PC-3 (cell line): ENCODE measurements at regions of chr20 and their contacts with region 1.

Region 1: GRCh38 chr20:63657937-63658748 is at the start of gene RTEL1:
- DNase-seq: peak; percentile 93
- ATAC-seq: peak; percentile 97
- H3K4me3 ChIP-seq: peak within 1 kb of the TSS; percentile 91
- H3K27ac ChIP-seq: peak within 1 kb of the TSS; percentile 41
- H3K4me1 ChIP-seq: peaks cover 9% of the 10 kb centered on the region; the same call in 1 of the 2 replicates
- H3K27me3 ChIP-seq: no peaks in the 10 kb centered on the region
- CTCF ChIP-seq: no peak
- total RNA-seq, gene RTEL1: 43.0 and 56.2 TPM in 2 replicates

Region 2: DNA sequence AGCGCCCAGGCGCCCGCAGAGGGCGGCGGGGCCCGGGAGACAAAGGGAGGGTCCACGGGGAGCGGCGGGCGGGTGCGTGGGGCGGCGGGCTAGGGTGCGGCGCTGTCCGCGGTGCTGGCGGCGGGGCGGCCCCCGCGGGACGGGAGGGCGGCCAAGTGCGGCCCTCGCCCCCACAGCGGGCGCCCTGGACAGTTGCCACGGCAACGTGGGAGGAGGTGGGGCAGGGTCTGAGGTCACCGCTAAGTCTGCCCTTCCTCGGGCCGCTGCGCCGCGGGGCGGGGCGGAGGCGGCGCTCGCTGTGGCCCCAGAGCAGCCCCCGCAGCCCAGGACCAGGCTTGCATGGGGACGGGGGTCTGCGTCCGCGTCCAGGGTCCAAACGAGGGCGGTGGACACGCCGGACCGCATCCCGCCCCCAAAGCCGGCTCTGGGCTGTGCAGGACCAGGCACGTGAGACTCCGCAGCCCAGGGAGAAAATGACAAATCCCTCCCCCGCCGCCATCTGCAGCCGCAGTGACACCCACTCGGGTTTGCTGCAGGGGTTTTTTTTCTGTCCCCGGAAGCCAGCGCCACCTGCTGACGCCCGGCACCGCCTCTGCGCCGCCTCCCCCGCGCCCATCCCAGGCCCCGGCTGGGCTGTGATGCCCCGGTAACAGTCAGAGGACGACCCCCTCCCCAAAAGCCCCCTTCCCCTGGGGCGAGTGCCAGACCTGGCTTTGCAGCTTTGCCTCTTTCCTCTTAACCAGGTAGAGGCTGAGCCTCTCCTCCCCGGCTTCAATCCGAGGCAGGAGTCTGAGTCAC is 479.1 kb before region 1 on chr20:
- CTCF ChIA-PET with region 1: no interaction called
- POLR2A ChIA-PET with region 1: no interaction called
- intact Hi-C with region 1: no loop called
- DNase-seq: peak; percentile 39
- ATAC-seq: peak; percentile 61
- H3K4me3 ChIP-seq: no peak overlapping the region
- H3K27ac ChIP-seq: no peak overlapping the region
- H3K4me1 ChIP-seq: no peaks in the 10 kb centered on the region; the same call in 1 of the 2 replicates
- H3K27me3 ChIP-seq: peaks cover 48% of the 10 kb centered on the region
- CTCF ChIP-seq: peak; percentile 82

Region 3: GRCh38 chr20:63627129-63627750 is 30.9 kb before region 1 on chr20:
- CTCF ChIA-PET with region 1: no interaction called
- POLR2A ChIA-PET with region 1: no interaction called
- intact Hi-C with region 1: loop called (anchors 2 kb)
- DNase-seq: peak; percentile 95
- ATAC-seq: peak; percentile 79
- H3K4me3 ChIP-seq: peak overlapping the region; percentile 93
- H3K27ac ChIP-seq: peak overlapping the region; percentile 58
- H3K4me1 ChIP-seq: peaks cover 14% of the 10 kb centered on the region
- H3K27me3 ChIP-seq: no peaks in the 10 kb centered on the region
- CTCF ChIP-seq: no peak

Region 4: DNA sequence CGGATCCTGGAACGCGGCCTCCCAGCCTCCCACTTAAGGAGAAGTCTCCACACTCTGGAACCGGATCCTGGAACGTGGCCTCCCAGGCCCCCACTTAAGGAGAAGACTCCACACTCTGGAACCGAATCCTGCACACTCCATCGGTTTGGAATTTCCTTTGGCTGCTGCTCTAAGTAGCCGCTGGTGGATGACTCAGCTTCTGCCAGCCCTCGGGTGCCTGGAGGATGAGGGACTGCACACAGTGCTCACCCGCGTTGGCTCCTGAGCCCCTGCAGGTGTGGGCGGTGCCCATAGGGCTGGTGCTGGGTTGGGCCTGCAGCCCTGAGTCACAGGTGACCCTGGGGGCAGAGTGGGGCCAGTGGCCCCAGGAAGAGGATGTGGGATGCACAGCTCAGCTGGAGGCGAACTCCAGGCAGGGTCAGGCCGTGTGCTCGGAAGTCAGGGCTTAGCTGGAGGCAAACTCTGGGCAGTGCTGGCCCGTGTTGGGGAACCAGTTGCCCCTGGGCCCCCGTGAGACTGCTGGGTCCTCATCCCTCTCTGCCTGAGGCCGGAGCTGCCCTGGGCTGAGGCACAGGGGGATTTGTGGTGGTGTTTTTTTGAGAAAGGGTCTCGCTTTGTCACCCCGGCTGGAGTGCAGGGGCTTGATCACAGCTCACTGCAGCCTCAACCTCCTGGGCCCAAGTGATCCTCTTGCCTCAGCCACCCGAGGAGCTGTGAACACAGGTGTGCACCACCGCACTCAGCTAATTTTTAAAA is 24.4 kb after region 1 on chr20:
- CTCF ChIA-PET with region 1: interaction called, 3 read pairs
- POLR2A ChIA-PET with region 1: no interaction called
- intact Hi-C with region 1: loop called (anchors 2 kb)
- DNase-seq: peak; percentile 100
- ATAC-seq: peak; percentile 93
- H3K4me3 ChIP-seq: no peak overlapping the region
- H3K27ac ChIP-seq: peak overlapping the region; percentile 84
- H3K4me1 ChIP-seq: peaks cover 34% of the 10 kb centered on the region
- H3K27me3 ChIP-seq: no peaks in the 10 kb centered on the region
- CTCF ChIP-seq: no peak